ENCODE measurements at regions of chr10 and their contacts with region 1.

Region 1: DNA sequence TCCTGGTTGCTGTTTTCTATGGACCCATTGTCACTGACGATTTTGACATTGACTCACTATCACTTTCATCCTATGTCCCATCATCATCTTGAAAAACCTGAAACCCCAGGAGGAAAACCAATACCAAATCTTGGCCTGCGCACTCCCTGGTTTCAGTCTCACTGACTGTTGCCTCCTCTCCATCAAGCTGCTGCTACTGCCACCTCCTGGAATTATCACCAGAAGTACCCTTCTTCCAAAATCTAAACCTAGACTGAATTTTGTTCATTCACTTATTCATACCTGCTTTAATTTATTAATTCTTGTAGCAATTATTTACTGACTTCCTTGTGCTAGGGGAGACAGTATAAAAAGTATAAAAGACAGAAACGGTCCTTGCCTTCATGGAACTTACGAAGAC is 44.5 kb upstream of the ACBD5 start:
- DNase-seq: peak; percentile 48 to 62
- H3K4me3 ChIP-seq: no peak overlapping the region
- H3K4me3 Mint-ChIP-seq: no peak overlapping the region
- H3K27ac Mint-ChIP-seq: peak overlapping the region; percentile 16
- H3K4me1 ChIP-seq: no peaks in the 10 kb centered on the region
- H3K4me1 Mint-ChIP-seq: peaks cover 7% of the 10 kb centered on the region
- H3K27me3 ChIP-seq: no peaks in the 10 kb centered on the region
- H3K27me3 Mint-ChIP-seq: no peaks in the 10 kb centered on the region
- CTCF ChIP-seq: peak; percentile 33 to 67

Region 2: DNA sequence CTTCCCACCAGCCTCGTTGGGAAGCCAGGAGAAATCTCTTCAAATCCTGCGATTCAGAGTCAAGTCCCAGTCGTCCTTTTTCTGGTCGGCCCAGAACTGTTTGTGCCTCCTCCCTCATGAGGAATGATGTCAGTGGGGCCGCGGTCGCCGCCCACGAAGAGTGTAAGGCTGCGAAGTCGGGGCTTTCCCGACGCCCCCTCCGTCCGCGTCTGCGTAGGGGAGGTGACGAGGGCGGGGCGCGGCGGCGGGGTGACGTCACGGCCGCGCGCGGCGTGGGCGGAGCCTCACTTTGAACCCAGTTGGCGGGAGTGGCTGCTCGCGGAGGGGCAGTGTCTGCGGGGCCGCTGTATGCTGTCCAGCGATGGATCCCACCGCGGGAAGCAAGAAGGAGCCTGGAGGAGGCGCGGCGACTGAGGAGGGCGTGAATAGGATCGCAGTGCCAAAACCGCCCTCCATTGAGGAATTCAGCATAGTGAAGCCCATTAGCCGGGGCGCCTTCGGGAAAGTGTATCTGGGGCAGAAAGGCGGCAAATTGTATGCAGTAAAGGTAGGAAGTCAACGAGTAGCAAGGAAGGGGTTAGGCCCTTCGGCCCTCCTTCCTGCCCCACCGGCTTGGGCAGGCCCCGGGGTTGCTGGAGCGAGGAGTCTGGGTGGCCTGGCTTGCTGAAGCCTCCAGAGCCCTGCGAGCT is 129.9 kb before region 1 on chr10 and contains the start of gene MASTL:
- CTCF ChIA-PET with region 1: interaction called, 3 read pairs
- POLR2A ChIA-PET with region 1: no interaction called
- intact Hi-C with region 1: loop called (anchors 1 kb)
- DNase-seq: peak; percentile 95 to 96
- H3K4me3 ChIP-seq: peak within 1 kb of the TSS; percentile 52
- H3K4me3 Mint-ChIP-seq: peak within 1 kb of the TSS; percentile 99
- H3K27ac Mint-ChIP-seq: peak within 1 kb of the TSS; percentile 100
- H3K4me1 ChIP-seq: peaks cover 14% of the 10 kb centered on the region; the same call in 1 of the 2 replicates
- H3K4me1 Mint-ChIP-seq: peaks cover 31% of the 10 kb centered on the region
- H3K27me3 ChIP-seq: no peaks in the 10 kb centered on the region
- H3K27me3 Mint-ChIP-seq: no peaks in the 10 kb centered on the region
- CTCF ChIP-seq: no peak
- total RNA-seq, gene MASTL: 40.2 and 40.5 TPM in 2 replicates

Region 3: DNA sequence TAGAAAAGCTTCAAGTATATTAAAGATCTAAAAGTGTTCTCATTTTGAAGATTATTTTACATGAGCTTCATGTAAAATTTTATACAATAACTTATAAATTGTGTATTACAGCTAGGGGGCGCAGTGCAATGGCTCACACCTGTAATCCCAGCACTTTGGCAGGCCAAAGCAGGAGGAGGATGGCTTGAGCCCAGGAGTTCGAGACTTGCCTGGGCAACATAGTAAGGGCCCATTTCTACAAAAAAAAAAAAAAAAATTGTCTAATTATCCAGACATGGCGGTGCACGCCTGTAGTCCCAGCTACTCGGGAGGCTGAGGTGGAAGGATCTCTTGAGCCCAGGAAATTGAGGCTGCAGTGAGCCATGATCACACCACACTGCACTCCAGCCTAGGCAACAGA is 61.1 kb before region 1 on chr10:
- CTCF ChIA-PET with region 1: interaction called, 5 read pairs
- POLR2A ChIA-PET with region 1: no interaction called
- intact Hi-C with region 1: loop called (anchors 1 kb)
- DNase-seq: peak; percentile 51 to 66
- H3K4me3 ChIP-seq: no peak overlapping the region
- H3K4me3 Mint-ChIP-seq: no peak overlapping the region
- H3K27ac Mint-ChIP-seq: no peak overlapping the region
- H3K4me1 ChIP-seq: no peaks in the 10 kb centered on the region
- H3K4me1 Mint-ChIP-seq: no peaks in the 10 kb centered on the region
- H3K27me3 ChIP-seq: no peaks in the 10 kb centered on the region
- H3K27me3 Mint-ChIP-seq: no peaks in the 10 kb centered on the region
- CTCF ChIP-seq: peak; percentile 59 to 61

Region 4: GRCh38 chr10:27258838-27259812 is 26.0 kb before region 1 on chr10:
- CTCF ChIA-PET with region 1: no interaction called
- POLR2A ChIA-PET with region 1: no interaction called
- intact Hi-C with region 1: no loop called
- DNase-seq: no peak
- H3K4me3 ChIP-seq: peak overlapping the region; percentile 22
- H3K4me3 Mint-ChIP-seq: peak overlapping the region; percentile 76
- H3K27ac Mint-ChIP-seq: no peak overlapping the region
- H3K4me1 ChIP-seq: no peaks in the 10 kb centered on the region
- H3K4me1 Mint-ChIP-seq: no peaks in the 10 kb centered on the region
- H3K27me3 ChIP-seq: no peaks in the 10 kb centered on the region
- H3K27me3 Mint-ChIP-seq: peaks cover 2% of the 10 kb centered on the region
- CTCF ChIP-seq: no peak

Measured in Caco-2 (cell line).